ENCODE measurements at regions of chr10 and their contacts with region 1.

Region 1: GRCh38 chr10:51010977-51011376 is 63.3 kb upstream of the PRKG1 start:
- DNase-seq: peak in 3 of 9 experiments; percentile 8 to 53 (median 40)
- ATAC-seq: no peak
- H3K4me3 ChIP-seq: no peak overlapping the region
- H3K4me3 Mint-ChIP-seq: no peak overlapping the region
- H3K27ac ChIP-seq: no peak overlapping the region
- H3K27ac Mint-ChIP-seq: no peak overlapping the region
- H3K4me1 ChIP-seq: no peaks in the 10 kb centered on the region
- H3K4me1 Mint-ChIP-seq: peaks cover 2% of the 10 kb centered on the region
- H3K27me3 ChIP-seq: no peaks in the 10 kb centered on the region
- H3K27me3 Mint-ChIP-seq: peaks cover 18% of the 10 kb centered on the region
- CTCF ChIP-seq: peak; percentile 64

Region 2: DNA sequence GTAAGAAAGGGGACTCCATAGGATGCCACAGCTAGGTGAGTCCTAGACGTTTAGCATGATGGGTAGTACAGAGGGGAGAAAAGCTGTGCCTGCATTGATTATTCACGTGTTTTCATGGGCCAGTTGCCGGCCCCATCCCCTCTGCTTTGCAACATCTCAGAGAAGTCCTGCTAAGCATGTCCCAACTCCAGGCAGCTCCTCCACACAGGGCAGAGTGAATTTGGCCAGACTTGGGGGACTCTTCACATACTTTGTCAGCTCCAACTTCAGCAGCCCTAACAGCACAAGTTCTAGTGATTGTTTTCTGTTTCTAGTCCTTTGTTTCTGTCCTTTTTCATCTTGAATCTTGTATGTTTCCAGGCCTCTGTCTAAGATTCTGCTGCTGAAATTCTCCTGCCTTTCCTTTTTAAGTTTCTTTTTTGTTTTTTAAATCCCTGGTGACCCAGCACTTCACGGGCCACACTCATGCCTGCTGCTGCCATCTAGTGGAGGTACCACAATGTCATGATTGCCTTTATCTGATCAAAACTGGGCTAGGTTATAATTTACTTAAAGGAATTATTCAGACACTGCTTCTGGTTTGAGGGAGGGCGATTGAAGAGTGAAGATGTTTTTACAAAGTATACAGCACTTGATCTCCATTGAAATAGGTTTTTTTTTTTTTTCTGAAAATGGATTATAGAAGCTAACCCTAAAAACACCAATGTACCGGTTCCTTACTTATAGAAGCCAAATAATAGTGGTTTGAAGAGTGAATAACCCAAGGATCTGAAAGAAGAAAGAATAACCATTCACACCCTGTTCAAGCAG is 411.5 kb after region 1 on chr10:
- CTCF ChIA-PET with region 1: no interaction called
- POLR2A ChIA-PET with region 1: no interaction called
- intact Hi-C with region 1: loop called (anchors 10 kb)
- DNase-seq: peak in 5 of 9 experiments; percentile 7 to 57 (median 17)
- ATAC-seq: no peak
- H3K4me3 ChIP-seq: no peak overlapping the region
- H3K4me3 Mint-ChIP-seq: no peak overlapping the region
- H3K27ac ChIP-seq: no peak overlapping the region
- H3K27ac Mint-ChIP-seq: no peak overlapping the region
- H3K4me1 ChIP-seq: no peaks in the 10 kb centered on the region
- H3K4me1 Mint-ChIP-seq: no peaks in the 10 kb centered on the region
- H3K27me3 ChIP-seq: no peaks in the 10 kb centered on the region
- H3K27me3 Mint-ChIP-seq: peaks cover 2% of the 10 kb centered on the region
- CTCF ChIP-seq: peak; percentile 11

Region 3: DNA sequence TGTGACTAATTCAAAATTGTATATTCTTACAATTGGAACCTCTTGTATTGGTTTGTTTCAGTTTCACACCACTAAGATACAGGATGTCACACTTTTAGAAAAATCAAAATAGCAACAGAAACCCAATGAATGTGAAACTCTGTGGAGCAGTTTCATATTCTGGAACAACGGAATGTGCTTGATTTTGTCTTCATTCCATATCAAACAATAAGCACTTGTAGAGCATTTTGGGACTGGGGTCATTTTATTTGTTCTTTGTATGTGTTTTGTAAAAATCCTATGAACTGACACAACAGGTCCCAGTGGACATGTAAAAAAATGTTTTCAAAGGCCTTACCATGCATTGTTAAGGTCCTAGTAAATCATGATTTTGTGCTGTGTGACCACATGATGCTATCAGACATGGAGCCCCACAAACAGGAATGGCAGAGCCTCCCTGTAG is 1426.2 kb after region 1 on chr10:
- CTCF ChIA-PET with region 1: no interaction called
- POLR2A ChIA-PET with region 1: no interaction called
- intact Hi-C with region 1: no loop called
- DNase-seq: no peak
- ATAC-seq: no peak
- H3K4me3 ChIP-seq: no peak overlapping the region
- H3K4me3 Mint-ChIP-seq: no peak overlapping the region
- H3K27ac ChIP-seq: no peak overlapping the region
- H3K27ac Mint-ChIP-seq: no peak overlapping the region
- H3K4me1 ChIP-seq: no peaks in the 10 kb centered on the region
- H3K4me1 Mint-ChIP-seq: no peaks in the 10 kb centered on the region
- H3K27me3 ChIP-seq: no peaks in the 10 kb centered on the region
- H3K27me3 Mint-ChIP-seq: no peaks in the 10 kb centered on the region
- CTCF ChIP-seq: no peak

Measured in CD8-positive, alpha-beta T cell (primary cell).